AG04450 (cell line): ENCODE measurements at regions of chr10 and their contacts with region 1.

Region 1: DNA sequence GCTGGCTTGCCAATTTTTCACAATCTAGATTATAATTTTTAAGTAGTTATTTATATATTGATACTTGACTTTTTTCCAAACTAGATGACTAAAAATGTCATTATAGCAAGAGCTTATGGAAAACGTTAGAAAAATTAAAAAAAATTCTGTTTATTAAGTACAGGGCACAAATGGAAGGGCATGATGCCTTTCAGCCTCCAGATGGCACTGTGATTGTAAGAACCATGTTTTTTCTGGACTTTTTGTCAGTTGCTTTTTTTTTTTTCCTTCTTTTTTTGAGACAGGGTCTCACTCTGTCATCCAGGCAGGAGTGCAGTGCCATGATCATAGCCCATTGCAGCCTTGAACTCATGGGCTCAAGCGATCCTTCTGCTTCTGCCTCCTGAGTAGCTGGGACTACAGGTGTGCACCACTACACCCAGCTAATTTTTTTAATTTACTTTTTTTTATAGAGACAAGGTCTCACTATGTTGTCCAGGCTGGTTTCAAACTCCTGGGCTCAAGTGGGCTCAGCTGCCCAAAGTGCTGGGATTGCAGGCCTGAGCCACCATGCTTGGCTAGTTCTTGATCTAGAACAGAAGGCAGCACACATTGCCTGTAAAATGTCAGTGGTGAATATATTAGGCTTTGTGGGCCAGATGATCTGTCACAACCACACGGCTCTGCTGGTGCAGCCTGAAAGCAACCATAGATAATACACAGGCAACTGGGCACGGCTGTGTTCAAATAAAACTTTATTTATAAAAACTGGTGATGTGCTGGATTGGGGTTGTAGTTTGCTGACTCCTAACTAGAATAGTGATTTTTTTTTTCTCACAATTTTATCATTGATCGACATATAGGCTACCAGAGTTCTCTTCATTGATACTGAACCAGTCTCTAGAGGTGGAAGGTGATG is 27.4 kb downstream of the UCMA start:
- DNase-seq: peak; percentile 21
- H3K4me3 ChIP-seq: no peak overlapping the region
- H3K27ac ChIP-seq: no peak overlapping the region
- H3K27me3 ChIP-seq: no peaks in the 10 kb centered on the region
- CTCF ChIP-seq: peak; percentile 69

Region 2: DNA sequence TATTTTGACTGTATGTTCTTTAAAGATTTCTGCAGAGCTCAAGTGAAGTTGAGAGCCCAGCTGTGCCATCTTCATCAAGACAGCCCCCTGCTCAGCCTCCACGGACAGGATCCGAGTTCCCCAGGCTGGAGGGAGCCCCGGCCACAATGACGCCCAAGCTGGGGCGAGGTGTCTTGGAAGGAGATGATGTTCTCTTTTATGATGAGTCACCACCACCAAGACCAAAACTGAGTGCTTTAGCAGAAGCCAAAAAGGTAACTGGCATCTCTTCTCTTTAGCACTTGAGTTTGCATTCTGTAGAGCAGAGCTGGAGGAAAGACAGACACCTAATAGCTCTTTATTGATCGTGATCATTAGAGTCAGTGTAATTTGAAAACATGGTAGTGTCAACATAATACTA is 11.8 kb before region 1 on chr10:
- CTCF ChIA-PET with region 1: interaction called, 13 read pairs
- POLR2A ChIA-PET with region 1: interaction called, 4 read pairs
- DNase-seq: no peak
- H3K4me3 ChIP-seq: no peak overlapping the region
- H3K27ac ChIP-seq: no peak overlapping the region
- H3K27me3 ChIP-seq: no peaks in the 10 kb centered on the region
- CTCF ChIP-seq: no peak

Region 3: DNA sequence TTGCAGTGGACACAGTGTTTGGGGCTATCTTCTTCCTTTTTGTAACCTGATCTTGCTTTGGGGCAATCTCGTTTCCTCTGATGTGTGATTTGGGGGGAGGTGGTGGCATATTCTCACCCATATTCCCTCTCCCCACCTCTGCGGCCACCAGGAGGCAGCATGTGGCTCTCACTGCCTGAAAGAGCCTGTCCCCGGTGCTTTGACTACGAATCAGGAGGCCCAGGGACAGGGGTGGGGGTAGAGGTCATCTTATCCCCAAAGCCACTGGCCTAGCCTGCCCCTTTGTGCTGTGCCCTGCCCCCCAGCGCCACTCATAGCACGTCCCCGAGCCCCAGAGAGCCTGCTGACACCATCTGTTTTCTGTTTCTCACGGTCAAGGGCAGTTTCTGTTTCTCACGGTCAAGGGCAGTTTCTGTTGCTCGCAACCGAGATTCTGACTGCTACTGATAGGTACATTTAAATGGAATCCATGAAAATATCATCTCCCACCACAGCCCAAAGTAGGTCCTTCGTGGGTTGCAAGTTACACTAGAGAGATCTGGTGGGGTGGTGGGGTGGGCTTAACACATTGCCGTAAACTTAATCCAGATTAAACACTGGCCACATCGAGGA is 64.9 kb after region 1 on chr10:
- CTCF ChIA-PET with region 1: interaction called, 15 read pairs
- POLR2A ChIA-PET with region 1: no interaction called
- DNase-seq: no peak
- H3K4me3 ChIP-seq: no peak overlapping the region
- H3K27ac ChIP-seq: no peak overlapping the region
- H3K27me3 ChIP-seq: no peaks in the 10 kb centered on the region
- CTCF ChIP-seq: peak; percentile 57

Region 4: GRCh38 chr10:13276749-13277365 is 70.1 kb after region 1 on chr10:
- CTCF ChIA-PET with region 1: interaction called, 15 read pairs
- POLR2A ChIA-PET with region 1: no interaction called
- DNase-seq: no peak
- H3K4me3 ChIP-seq: no peak overlapping the region
- H3K27ac ChIP-seq: no peak overlapping the region
- H3K27me3 ChIP-seq: no peaks in the 10 kb centered on the region
- CTCF ChIP-seq: peak; percentile 31

Region 5: DNA sequence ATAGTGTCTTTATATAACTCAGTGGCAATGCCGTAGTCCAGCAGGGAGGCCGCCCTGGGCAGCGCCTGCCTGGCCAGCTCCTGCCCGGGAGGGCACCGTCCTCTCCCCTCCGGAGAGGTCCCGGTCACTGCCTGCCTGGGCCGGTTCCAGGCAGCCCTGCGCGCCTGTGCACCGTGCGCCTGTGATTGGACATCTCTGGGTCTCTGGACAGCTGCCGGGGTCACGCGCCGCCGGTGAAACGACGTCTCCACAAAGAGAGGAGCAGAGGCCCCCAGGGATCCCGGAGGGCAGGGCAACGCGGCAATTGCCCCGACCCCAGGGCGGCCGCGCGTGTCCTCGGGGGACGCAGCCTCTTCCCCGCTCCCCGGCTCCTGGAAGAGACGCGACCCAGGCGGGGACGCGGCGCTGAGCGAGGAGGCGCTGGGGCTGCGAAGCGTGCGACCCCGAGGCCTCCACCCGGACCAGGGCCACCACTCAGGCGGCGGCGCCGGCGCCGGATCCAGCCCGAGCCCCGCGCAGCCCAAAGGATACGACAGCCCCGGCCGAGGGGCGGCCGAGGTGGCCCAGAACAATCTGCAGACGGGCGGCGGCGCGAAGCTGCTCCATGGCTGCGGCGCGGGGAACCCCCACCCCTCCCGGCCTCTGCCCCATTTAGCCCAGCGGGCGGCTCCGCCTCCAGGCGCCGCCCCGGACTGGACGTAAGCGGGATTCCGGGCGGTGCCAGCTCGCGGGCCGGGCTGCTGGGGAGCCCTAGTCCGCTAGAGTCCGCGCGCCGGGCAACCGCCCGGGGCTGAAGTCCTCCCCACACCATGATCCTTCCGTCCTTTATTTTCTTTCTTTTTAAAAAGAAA is 92.9 kb after region 1 on chr10 and contains the start of gene PHYH:
- CTCF ChIA-PET with region 1: interaction called, 137 read pairs
- POLR2A ChIA-PET with region 1: no interaction called
- DNase-seq: peak; percentile 33
- H3K4me3 ChIP-seq: peak within 1 kb of the TSS; percentile 68
- H3K27ac ChIP-seq: peak within 1 kb of the TSS; percentile 68
- H3K27me3 ChIP-seq: no peaks in the 10 kb centered on the region
- CTCF ChIP-seq: no peak
- polyA plus RNA-seq, gene PHYH: 15.3 and 16.7 TPM in 2 replicates